Activated T-helper 1 cell treated with anti-CD3 and anti-CD28 coated beads, Interleukin-12 subunit alpha, Interleukin-12 subunit beta, Interleukin-2, Interleukin-4 antibody, amounts not matched to agents 30 ng/mL and 10 ng/mL and 1 ng/mL, durations not matched to agents 14 hours and 24 hours and 36 hours (primary cell): ENCODE measurements at regions of chr14 and their contacts with region 1.

Region 1: DNA sequence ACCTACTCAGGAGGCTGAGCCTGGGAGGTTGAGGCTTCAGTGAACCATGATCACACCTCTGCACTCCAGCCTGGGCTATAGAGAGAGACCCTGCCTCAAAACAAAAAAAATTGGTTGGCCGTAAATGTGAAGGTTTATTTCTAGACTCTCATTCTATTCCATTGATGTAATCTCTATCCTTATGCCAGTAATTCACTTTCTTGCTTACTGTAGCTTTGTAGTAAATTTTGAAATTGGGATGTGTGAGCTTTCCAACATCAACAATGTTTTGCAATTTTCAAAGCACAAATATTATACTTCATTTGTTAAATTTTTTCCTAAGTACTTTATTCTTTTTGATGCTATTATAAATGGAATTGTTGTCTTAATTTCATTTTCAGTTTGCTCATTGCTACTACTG is 24.6 kb downstream of the LIN52 start:
- DNase-seq: no peak
- H3K4me3 Mint-ChIP-seq: no peak overlapping the region
- H3K27ac Mint-ChIP-seq: no peak overlapping the region
- H3K4me1 Mint-ChIP-seq: no peaks in the 10 kb centered on the region
- H3K27me3 Mint-ChIP-seq: no peaks in the 10 kb centered on the region

Region 2: DNA sequence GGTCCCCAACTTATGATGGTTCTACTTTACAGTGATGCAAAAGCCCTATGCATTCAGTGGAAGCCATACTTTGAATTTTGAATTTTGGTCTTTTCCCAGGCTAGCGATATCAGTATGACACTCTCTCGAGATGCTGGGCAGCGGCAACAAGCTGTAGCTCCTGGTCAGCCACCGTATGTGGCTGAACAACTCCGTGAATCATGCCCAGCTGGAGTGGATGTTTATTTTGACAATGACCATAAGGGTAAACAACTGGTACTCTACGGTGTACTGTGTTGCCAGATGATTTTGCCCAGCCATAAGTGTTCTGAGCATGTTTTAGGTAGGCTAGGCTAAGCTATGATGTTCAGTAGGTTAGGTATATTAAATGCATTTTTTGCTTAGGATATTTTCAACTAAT is 230.9 kb before region 1 on chr14:
- intact Hi-C with region 1: no loop called
- DNase-seq: no peak
- H3K4me3 Mint-ChIP-seq: no peak overlapping the region
- H3K27ac Mint-ChIP-seq: no peak overlapping the region
- H3K4me1 Mint-ChIP-seq: no peaks in the 10 kb centered on the region
- H3K27me3 Mint-ChIP-seq: peaks cover 2% of the 10 kb centered on the region

Region 3: GRCh38 chr14:74217672-74218448 is 108.5 kb after region 1 on chr14:
- intact Hi-C with region 1: loop called (anchors 1 kb)
- DNase-seq: peak; percentile 63
- H3K4me3 Mint-ChIP-seq: no peak overlapping the region
- H3K27ac Mint-ChIP-seq: no peak overlapping the region
- H3K4me1 Mint-ChIP-seq: no peaks in the 10 kb centered on the region
- H3K27me3 Mint-ChIP-seq: peaks cover 28% of the 10 kb centered on the region

Region 4: DNA sequence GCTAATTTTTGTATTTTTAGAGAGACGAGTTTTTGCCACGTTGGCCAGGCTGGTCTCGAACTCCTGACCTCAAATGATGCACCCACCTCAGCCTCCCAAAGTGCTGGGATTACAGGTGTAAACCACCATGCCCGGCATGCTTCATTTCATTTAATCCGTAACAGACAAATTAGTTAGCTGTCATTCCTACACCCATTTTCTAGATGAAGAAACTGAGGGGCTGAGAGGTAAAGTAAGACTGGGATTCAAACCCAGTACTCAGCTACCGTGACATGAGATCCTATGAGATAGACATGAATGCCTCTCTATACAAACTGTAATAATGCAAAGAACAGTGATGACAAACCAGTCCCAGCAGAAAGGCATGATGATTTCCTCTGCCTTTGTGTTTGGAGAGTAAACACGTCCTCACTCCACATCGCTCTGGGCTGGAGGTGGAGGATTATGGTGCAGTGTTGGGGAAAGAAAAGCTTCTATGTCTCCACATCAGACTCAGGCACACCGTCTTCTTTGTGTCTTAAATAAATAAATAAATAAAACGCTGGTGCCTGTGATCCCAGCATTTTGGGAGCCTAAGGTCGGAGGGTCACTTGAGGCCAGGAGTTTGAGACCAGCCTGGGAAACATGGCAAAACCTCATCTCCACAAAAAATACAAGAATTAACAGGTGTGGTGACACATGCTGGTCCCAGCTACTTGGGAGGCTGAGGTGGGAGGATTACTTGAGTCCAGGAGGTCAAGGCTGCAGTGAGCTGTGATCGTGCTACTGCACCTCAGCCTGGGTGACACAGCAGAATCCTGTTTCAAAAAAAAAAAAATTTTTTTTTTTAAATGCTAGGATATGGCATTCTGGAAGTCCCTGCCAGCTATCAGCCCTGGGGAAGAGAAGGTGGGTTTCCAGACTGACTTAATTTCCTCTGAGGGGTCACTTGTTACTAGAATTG is 140.3 kb after region 1 on chr14:
- intact Hi-C with region 1: loop called (anchors 1 kb)
- DNase-seq: no peak
- H3K4me3 Mint-ChIP-seq: no peak overlapping the region
- H3K27ac Mint-ChIP-seq: no peak overlapping the region
- H3K4me1 Mint-ChIP-seq: peaks cover 7% of the 10 kb centered on the region
- H3K27me3 Mint-ChIP-seq: peaks cover 43% of the 10 kb centered on the region

Region 5: DNA sequence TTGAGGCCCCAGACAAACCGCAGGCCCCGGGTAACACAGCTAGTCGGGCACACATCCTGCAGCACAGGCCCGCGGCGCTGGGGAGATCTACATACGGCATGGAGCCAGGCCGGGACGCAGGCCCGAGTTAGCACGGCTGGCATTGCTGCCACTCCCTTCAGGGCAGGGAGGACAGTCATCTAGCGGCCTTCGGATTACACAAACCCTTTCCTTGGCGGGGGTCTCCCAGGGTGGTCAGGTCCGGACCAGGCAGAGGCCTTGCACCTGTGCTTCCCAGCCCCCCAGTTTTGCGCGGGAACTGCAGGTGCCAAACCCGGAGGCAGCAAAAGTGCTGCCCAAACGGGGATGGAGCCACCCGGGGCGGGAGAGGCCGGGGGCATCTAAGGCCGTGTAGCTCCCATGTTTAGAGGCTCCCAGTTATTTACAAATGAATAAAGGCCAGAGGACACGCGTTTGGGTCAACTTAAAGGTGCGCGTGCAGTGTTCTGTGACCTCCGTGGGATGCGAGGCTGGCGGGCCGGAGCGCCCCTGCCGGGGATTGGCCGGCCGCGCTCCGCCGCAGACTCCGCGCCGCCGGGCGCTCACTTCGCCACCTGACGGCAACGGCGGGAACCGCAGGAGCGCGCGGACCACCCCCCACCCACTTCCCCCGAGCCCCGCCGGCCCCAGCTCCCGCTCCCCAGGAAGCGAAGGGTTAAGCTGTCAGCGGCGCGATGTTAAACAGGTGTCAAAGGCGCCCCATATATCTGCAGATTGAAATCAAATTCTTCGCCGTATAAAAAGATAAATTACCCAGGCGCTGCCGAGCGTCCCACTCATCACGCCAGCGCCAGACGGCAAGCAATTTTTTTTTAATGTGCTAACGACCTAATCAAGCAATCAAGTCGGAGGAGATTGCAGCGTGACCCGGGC is 148.0 kb after region 1 on chr14:
- intact Hi-C with region 1: loop called (anchors 1 kb)
- DNase-seq: peak; percentile 43
- H3K4me3 Mint-ChIP-seq: peak overlapping the region; percentile 84
- H3K27ac Mint-ChIP-seq: peak overlapping the region; percentile 72
- H3K4me1 Mint-ChIP-seq: no peaks in the 10 kb centered on the region
- H3K27me3 Mint-ChIP-seq: peaks cover 26% of the 10 kb centered on the region